ENCODE measurements at regions of chr11 and their contacts with region 1.

Region 1: GRCh38 chr11:93784152-93784934 is at the start of gene MED17:
- DNase-seq: peak; percentile 75
- ATAC-seq: peak; percentile 93
- H3K4me3 Mint-ChIP-seq: peak within 1 kb of the TSS; percentile 99
- H3K27ac Mint-ChIP-seq: peak within 1 kb of the TSS; percentile 90
- H3K4me1 Mint-ChIP-seq: peaks cover 40% of the 10 kb centered on the region
- H3K27me3 Mint-ChIP-seq: no peaks in the 10 kb centered on the region
- CTCF ChIP-seq: no peak
- total RNA-seq, gene MED17: 47.9 and 55.2 TPM in 2 replicates

Region 2: DNA sequence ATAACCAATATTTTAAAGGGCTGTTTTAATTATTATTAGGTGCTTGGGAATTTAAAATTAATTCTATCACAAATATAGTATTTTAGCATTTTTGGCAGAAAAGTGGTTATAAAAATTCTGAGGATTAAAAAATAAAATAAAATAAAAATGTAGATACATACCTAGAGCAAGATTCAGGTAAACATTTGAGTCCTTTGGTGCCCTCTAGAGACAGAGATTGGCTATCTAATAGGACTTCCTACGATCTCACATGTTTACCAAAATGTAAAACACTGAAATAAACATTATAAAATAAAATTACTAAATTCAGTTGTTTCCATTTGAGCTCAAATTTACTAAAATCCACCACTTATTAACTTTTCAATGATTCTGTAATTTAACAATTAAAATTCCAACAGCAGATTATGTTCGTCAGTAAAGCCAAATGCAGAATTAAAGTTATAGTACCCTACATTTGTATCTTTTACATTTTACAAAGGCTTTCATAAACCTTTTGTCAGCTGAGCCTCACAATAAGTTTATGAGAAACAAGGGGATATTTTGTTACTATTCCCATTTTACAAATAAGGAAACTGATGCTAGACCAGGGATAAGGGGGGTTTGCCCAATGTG is 614.3 kb before region 1 on chr11:
- CTCF ChIA-PET with region 1: no interaction called
- POLR2A ChIA-PET with region 1: no interaction called
- intact Hi-C with region 1: no loop called
- DNase-seq: no peak
- ATAC-seq: no peak
- H3K4me3 Mint-ChIP-seq: no peak overlapping the region
- H3K27ac Mint-ChIP-seq: no peak overlapping the region
- H3K4me1 Mint-ChIP-seq: peaks cover 2% of the 10 kb centered on the region
- H3K27me3 Mint-ChIP-seq: no peaks in the 10 kb centered on the region
- CTCF ChIP-seq: no peak

Region 3: DNA sequence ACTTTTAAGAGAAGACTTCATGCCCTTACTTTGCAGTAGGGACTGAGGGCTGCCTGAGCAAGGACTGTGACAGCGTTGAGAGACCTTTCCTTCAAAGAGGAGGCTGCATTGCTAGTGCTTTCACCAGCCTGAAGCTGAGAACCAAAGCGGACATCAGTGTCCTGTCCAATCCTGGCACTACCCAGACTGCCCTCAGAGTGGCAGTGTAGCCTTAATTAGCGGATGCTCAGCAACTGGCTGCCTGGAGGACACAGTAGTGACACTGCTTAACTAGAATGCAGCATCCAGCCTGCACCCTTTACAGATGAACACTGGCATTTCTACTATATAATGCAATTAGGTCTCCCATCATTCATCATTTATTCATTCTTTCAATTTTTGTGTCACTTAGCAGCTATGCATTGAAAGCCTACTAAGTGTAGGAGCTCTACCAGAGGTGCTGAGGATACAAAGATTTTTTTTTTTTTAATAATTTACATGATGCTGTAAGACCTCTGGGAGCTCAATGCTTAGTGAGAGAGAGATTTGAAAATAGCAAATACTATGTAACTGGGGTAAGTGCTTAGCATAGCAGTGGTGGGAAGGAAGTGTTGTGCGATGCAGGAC is 549.6 kb before region 1 on chr11:
- CTCF ChIA-PET with region 1: interaction called, 3 read pairs
- POLR2A ChIA-PET with region 1: no interaction called
- intact Hi-C with region 1: loop called (anchors 10 kb)
- DNase-seq: peak; percentile 49
- ATAC-seq: peak; percentile 97
- H3K4me3 Mint-ChIP-seq: no peak overlapping the region
- H3K27ac Mint-ChIP-seq: no peak overlapping the region
- H3K4me1 Mint-ChIP-seq: no peaks in the 10 kb centered on the region
- H3K27me3 Mint-ChIP-seq: peaks cover 20% of the 10 kb centered on the region
- CTCF ChIP-seq: peak; percentile 73

Region 4: GRCh38 chr11:93662177-93662575 is 122.2 kb before region 1 on chr11:
- CTCF ChIA-PET with region 1: no interaction called
- POLR2A ChIA-PET with region 1: interaction called, 6 read pairs
- intact Hi-C with region 1: loop called (anchors 1 kb)
- DNase-seq: no peak
- ATAC-seq: no peak
- H3K4me3 Mint-ChIP-seq: peak overlapping the region; percentile 84
- H3K27ac Mint-ChIP-seq: peak overlapping the region; percentile 85
- H3K4me1 Mint-ChIP-seq: peaks cover 23% of the 10 kb centered on the region
- H3K27me3 Mint-ChIP-seq: no peaks in the 10 kb centered on the region
- CTCF ChIP-seq: no peak

Region 5: DNA sequence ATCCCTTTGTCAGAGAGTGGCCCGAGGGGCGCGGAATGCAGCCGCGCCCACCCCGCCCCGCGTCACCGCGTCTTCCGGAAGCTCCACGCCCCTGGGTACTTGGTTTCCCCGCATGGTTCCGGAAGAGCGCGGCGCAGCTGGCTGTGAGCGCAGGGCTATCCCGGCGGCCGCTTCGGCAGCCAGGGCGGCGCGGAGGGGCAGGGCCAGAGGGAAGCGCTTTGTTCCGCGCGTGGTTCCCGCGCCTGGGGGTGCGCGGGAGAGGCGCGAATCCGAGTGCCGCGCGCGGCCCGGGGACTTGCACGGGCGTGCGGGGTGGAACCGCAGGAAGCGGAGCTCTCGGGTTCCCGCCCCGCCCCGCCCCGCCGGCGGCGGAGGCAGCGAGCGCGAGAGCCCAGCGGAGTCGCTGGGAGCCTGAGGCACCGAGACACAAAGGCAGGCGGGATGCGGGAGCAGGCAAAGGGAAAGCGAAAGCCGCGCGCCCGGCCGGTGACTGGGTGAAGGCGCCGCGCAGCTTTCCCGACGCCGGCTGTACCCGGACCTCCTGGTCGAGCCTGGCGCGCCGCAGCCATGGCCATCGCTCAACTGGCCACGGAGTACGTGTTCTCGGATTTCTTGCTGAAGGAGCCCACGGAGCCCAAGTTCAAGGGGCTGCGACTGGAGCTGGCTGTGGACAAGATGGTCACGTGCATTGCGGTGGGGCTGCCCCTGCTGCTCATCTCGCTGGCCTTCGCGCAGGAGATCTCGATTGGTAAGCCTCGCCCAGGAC is 344.6 kb after region 1 on chr11 and contains the start of gene PANX1:
- CTCF ChIA-PET with region 1: no interaction called
- POLR2A ChIA-PET with region 1: interaction called, 10 read pairs
- intact Hi-C with region 1: loop called (anchors 2 kb)
- DNase-seq: peak; percentile 69
- ATAC-seq: peak; percentile 85
- H3K4me3 Mint-ChIP-seq: no peak within 1 kb of the TSS
- H3K27ac Mint-ChIP-seq: peak within 1 kb of the TSS; percentile 93
- H3K4me1 Mint-ChIP-seq: peaks cover 27% of the 10 kb centered on the region
- H3K27me3 Mint-ChIP-seq: no peaks in the 10 kb centered on the region
- CTCF ChIP-seq: no peak
- total RNA-seq, gene PANX1: 9.2 and 11.2 TPM in 2 replicates

Region 6: GRCh38 chr11:94315664-94316063 is 531.3 kb after region 1 on chr11:
- CTCF ChIA-PET with region 1: no interaction called
- POLR2A ChIA-PET with region 1: no interaction called
- intact Hi-C with region 1: no loop called
- DNase-seq: no peak
- ATAC-seq: no peak
- H3K4me3 Mint-ChIP-seq: no peak overlapping the region
- H3K27ac Mint-ChIP-seq: no peak overlapping the region
- H3K4me1 Mint-ChIP-seq: no peaks in the 10 kb centered on the region
- H3K27me3 Mint-ChIP-seq: no peaks in the 10 kb centered on the region
- CTCF ChIP-seq: no peak

Region 7: DNA sequence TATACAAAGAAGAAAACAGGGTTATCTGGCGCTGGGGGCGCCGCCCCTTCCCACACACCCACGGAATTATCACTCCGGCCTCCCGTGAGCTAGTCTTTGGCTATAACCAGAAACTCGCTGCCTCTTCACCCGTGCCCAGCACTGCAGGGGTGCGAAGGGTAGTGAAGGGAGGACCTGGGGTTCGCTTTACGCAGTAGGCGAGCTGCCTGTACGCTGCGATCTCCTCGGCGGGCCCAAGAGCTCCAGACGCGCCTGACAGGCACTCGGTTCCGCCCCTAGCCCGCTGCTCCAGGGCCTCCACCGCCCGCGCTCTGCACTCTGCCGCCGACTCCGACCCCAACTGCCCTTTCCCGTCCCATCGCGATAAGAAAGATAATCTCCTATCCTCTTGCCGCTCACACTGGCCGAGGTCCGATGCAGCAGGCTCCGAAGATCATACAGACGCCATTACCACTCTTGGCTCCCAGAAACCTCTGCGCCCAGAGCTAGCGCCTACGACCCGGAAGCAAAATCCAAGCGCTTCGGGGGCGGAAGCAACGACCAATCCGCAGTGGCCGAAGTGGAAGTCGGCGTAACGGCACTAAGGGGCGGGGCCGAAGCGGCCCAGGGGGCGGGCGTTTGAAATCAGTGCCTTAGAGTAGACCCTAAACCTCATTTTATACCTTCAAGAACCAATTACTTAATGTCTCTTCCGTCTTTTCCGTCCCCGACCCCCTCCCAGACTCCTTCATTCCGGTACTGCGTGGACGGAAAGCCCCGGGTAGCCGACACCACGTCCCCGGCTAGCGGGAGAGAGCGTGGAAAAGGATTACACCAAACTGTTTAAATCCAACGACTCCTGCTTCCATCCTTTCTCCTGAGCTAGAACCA is 1189.0 kb after region 1 on chr11 and contains the starts of genes CWC15 and KDM4D:
- CTCF ChIA-PET with region 1: no interaction called
- POLR2A ChIA-PET with region 1: interaction called, 3 read pairs
- intact Hi-C with region 1: loop called (anchors 5 kb)
- DNase-seq: peak; percentile 87
- ATAC-seq: peak; percentile 100
- H3K4me3 Mint-ChIP-seq: peak within 1 kb of the TSS; percentile 99
- H3K27ac Mint-ChIP-seq: peak within 1 kb of the TSS; percentile 95
- H3K4me1 Mint-ChIP-seq: peaks cover 20% of the 10 kb centered on the region
- H3K27me3 Mint-ChIP-seq: no peaks in the 10 kb centered on the region
- CTCF ChIP-seq: no peak
- total RNA-seq, gene CWC15: 69.1 and 69.2 TPM in 2 replicates
- total RNA-seq, gene KDM4D: 0.67 and 0.93 TPM in 2 replicates